HCT116 (cell line): ENCODE measurements at regions of chr13 and their contacts with region 1.

Region 1: DNA sequence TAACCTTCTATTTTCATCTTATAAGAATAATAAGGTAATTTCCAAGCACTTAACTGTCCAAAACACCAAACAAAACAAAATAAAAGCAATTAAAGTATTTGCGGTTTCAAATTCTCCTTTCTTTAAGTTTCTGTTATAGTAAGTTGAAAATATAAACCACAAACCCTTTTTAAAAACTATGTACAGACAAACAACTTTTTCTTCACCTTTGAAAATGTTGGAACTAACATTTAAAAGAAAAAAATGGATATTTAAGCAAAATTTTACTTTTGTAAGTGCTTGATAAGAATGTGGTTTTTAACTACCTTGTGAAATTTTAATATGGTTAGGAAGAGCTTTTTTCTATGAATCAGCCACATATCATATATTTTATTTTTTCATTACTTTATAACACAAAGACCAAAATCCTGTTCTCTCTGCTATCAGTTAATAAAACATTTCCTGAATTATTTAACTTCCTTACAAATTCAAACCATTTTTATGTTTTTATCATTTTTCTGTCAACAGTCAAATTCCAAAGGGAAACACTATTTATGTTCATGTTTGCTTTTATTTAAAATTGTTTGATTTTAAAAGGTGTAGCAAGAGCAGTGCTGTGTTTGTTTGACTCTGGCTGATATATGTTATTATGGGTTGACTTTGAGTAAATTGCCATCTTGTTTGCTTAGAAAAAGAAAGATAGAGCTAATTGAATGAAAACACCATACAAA is 554.1 kb upstream of the KLHL1 start:
- DNase-seq: no peak
- ATAC-seq: no peak
- H3K4me3 ChIP-seq: no peak overlapping the region
- H3K27ac ChIP-seq: no peak overlapping the region
- H3K4me1 ChIP-seq: no peaks in the 10 kb centered on the region
- H3K27me3 ChIP-seq: no peaks in the 10 kb centered on the region
- CTCF ChIP-seq: no peak
- POLR2A ChIP-seq: no peak
- RAD21 ChIP-seq: no peak

Region 2: DNA sequence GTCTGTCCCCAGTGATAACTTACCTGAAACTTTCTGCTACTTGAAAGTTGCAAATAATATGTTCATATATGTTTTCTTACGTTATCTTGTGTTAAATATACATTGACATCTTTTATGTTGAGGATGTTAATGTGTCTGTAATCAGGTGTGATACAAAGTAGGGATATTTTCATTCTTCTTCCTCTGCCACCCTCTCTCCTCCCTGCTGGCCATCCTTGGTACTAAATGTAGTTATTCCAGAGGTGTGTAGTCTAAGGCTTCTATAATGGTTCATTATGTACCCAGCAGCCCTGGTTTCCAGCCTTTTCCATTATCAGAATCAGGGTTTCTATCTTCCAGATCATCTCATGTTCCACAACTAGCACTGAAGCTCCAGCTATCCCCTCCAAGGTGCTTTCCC is 52.6 kb after region 1 on chr13:
- CTCF ChIA-PET with region 1: no interaction called
- POLR2A ChIA-PET with region 1: no interaction called
- RAD21 ChIA-PET with region 1: no interaction called
- intact Hi-C with region 1: loop called (anchors 10 kb)
- DNase-seq: no peak
- ATAC-seq: no peak
- H3K4me3 ChIP-seq: no peak overlapping the region
- H3K27ac ChIP-seq: no peak overlapping the region
- H3K4me1 ChIP-seq: no peaks in the 10 kb centered on the region
- H3K27me3 ChIP-seq: no peaks in the 10 kb centered on the region
- CTCF ChIP-seq: peak in 1 of 3 experiments; percentile 20; a peak in 1 of 6 replicates
- POLR2A ChIP-seq: no peak
- RAD21 ChIP-seq: no peak